A673 (cell line): ENCODE measurements at regions of chr2 and their contacts with region 1.

Region 1: DNA sequence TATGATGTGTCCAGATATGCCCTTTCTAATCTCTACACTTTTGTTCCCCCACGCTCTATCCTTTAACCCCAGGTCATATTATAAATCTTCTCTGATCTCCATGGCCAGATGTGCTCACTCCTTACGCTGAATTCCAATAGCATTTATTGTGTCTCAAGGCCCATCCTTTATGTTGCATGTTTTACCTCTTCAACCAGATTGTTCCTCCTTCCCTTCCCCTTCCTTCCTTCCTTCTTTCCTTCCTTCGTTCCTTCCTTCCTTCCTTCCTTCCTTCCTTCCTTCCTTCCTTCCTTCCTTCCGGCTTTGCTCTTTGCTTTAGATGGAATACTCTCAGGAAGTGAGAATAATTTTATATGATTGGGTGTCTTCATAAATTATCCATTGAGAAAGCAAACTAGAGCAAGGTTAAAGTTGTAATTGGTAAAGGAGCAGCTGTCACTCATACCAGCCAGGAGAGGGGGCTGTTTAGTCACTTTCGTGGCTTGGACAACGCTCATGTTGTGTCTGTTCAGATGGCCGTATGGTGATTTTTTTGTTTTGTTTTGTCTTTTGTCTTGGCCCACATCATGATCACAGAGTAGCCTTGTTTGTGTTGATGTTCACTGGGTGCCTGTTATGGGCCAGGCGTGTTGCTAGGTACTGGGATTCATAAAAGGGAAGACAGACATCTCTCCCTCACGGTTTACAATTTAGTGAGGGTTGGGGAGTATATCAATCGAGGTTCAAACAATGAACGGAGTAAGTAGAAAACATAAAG is 68.0 kb downstream of the DAW1 start:
- DNase-seq: peak; percentile 95
- H3K4me3 ChIP-seq: no peak overlapping the region
- H3K27ac ChIP-seq: peak overlapping the region; percentile 97
- H3K4me1 ChIP-seq: peaks cover 39% of the 10 kb centered on the region
- H3K27me3 ChIP-seq: no peaks in the 10 kb centered on the region
- CTCF ChIP-seq: peak; percentile 90

Region 2: GRCh38 chr2:227748079-227748478 is 191.4 kb before region 1 on chr2:
- CTCF ChIA-PET with region 1: no interaction called
- POLR2A ChIA-PET with region 1: no interaction called
- intact Hi-C with region 1: loop called (anchors 1 kb)
- DNase-seq: no peak
- H3K4me3 ChIP-seq: no peak overlapping the region
- H3K27ac ChIP-seq: no peak overlapping the region
- H3K4me1 ChIP-seq: no peaks in the 10 kb centered on the region
- H3K27me3 ChIP-seq: no peaks in the 10 kb centered on the region
- CTCF ChIP-seq: peak; percentile 41

Region 3: DNA sequence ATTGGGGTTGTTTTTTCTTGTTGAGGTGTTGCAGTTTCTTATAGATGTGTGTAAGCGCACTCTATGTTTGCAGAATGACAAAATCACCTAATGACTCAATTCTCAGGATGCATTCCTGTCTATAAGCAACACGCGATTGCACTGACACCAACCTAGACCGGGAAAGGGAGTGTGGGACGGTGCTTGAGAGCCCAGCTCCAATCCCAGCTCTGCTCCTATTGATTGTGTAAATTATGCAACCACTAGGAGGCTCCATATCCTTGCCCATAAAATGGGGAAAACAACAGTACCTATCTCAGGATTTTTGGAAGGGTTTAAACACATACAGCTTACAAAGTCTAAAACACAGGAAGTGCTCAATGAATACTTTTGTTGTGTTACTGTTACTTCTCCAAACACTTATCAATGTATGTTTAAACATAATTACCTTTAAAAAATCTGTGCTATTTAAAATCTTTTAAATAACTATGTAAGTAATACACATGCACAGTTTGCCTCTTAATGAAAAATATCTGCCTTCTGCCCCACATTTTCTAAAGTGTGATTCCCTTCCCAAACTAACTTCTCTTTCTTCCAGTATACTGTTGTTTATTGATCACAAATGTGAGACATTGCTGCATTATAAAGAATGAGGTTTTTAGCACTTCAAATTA is 109.5 kb after region 1 on chr2:
- CTCF ChIA-PET with region 1: no interaction called
- POLR2A ChIA-PET with region 1: no interaction called
- intact Hi-C with region 1: loop called (anchors 5 kb)
- DNase-seq: peak; percentile 88
- H3K4me3 ChIP-seq: no peak overlapping the region
- H3K27ac ChIP-seq: no peak overlapping the region
- H3K4me1 ChIP-seq: peaks cover 30% of the 10 kb centered on the region
- H3K27me3 ChIP-seq: no peaks in the 10 kb centered on the region
- CTCF ChIP-seq: peak; percentile 77

Region 4: DNA sequence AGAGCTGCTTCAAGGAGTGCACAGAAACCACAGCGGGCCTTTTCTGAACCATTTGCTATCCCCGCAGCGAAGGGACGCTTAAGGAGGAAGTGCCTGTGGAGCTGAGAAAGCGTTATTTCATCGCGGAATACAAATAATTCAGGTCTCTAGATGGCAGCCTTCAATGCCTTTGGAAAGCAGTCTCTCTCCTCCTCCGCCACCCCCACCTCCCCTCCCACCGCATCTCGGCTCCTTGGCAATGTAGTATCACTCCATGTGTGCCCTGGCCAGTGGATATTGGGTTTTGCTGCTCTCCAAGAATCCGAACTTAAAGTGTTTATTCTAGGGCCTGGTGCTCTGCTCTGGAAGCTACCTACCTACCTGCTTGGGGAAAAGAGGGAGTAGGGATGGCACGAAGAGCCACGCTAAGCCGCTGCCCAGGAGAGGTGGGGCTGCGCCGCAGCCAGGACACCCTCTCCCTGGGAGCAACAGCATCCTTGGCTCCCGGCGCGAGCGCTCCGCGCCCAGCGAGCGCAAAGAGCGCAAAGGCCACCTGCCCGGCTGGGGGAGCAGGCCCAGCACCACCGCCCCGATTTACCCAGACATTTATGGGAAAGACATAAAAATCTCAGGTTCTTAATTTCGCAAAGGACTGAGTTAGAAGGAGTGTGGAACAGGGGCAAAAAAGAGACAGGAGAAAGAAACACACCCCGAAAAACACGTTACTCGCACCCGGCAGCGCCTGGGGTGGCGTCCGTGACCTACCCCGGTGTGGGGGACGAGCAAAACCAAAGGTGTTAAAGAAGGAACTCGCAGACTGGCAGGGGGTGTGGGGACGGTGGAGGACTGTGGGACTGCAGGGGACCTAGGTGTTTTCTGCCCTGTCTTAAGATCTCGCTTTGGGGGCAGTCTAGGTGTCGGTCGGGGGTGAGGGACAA is 241.0 kb after region 1 on chr2:
- CTCF ChIA-PET with region 1: no interaction called
- POLR2A ChIA-PET with region 1: no interaction called
- intact Hi-C with region 1: loop called (anchors 1 kb)
- DNase-seq: peak; percentile 96
- H3K4me3 ChIP-seq: peak overlapping the region; percentile 66
- H3K27ac ChIP-seq: peak overlapping the region; percentile 63
- H3K4me1 ChIP-seq: peaks cover 23% of the 10 kb centered on the region
- H3K27me3 ChIP-seq: no peaks in the 10 kb centered on the region
- CTCF ChIP-seq: peak; percentile 52

Region 5: GRCh38 chr2:228352048-228352447 is 412.6 kb after region 1 on chr2:
- CTCF ChIA-PET with region 1: no interaction called
- POLR2A ChIA-PET with region 1: no interaction called
- intact Hi-C with region 1: no loop called
- DNase-seq: peak; percentile 59
- H3K4me3 ChIP-seq: no peak overlapping the region
- H3K27ac ChIP-seq: no peak overlapping the region
- H3K4me1 ChIP-seq: peaks cover 6% of the 10 kb centered on the region
- H3K27me3 ChIP-seq: no peaks in the 10 kb centered on the region
- CTCF ChIP-seq: no peak

Region 6: DNA sequence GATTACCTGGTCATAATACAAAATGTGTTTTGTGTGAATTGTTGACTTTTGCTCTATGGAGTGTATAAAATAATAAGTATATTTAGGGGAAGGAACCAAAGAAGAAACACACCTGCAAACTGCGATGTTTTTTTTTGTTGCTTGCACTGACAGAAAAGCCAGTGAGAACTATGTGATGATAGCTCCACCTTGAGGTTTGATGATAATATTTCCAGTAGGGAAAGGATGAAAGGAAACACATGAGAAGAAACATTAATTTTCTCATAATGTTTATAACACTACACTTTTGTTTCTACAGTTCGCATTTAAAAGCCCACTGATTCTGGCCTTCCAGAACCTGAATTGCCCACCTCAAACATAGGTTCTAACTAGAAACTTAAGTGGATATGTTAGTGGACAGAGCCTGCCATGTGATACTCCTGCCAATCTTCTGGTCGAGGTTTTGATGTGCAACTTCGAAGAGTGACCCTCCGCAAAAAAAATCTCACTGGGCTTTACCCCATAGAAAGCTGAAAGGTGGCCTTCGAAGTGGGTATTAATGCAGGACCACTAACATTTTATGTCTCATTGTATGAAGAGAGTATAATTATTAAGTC is 718.5 kb after region 1 on chr2:
- CTCF ChIA-PET with region 1: interaction called, 3 read pairs
- POLR2A ChIA-PET with region 1: no interaction called
- intact Hi-C with region 1: loop called (anchors 1 kb)
- DNase-seq: peak; percentile 75
- H3K4me3 ChIP-seq: no peak overlapping the region
- H3K27ac ChIP-seq: no peak overlapping the region
- H3K4me1 ChIP-seq: peaks cover 19% of the 10 kb centered on the region
- H3K27me3 ChIP-seq: no peaks in the 10 kb centered on the region
- CTCF ChIP-seq: peak; percentile 69